Ovary (tissue), 10 donors: ENCODE measurements at regions of chr15 and their contacts with region 1.

Region 1: DNA sequence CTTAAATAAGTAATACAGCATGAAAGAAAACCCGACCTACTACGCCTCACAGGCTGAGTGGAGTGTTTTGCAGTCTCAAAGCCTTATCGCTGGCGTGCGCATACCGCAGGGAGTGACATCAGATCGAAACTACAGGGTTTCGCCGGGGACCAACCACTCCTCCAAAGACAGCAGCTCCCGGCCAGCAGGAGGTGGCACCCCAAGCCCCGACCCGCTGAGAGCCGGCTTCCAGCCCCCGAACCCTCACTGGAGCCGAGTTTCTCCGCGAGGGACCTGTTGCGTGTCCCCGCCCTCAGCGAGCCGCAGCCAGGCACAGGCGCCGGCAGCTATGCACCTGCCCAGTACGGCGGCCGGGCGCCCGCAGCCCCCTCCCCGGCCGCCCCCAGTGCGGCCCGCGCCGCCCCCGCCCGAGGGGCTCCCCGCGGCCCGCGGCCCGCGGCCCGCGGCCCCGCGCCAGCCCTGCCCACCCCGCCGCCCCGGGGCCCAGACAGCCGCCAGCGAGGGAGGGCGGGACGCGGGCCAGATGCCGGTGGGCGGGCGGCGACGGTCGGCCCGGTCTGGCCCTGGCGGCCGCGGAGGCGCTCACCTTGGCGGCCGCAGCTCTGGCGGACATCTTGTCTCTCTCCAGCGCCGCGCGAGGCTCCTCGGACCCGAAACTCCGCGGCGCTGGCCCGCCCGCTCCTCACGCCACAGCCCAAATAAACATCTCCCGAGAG is 694 bp downstream of the TJP1 start:
- DNase-seq: peak; percentile 63 to 71 (median 66)
- H3K4me3 ChIP-seq: peak overlapping the region; percentile 95
- H3K27ac ChIP-seq: peak overlapping the region; percentile 90 to 92
- H3K4me1 ChIP-seq: peaks cover 5% of the 10 kb centered on the region
- H3K27me3 ChIP-seq: no peaks in the 10 kb centered on the region
- CTCF ChIP-seq: peak in 1 of 3 donors; percentile 20
- EP300 ChIP-seq: no peak
- POLR2A ChIP-seq: no peak

Region 2: DNA sequence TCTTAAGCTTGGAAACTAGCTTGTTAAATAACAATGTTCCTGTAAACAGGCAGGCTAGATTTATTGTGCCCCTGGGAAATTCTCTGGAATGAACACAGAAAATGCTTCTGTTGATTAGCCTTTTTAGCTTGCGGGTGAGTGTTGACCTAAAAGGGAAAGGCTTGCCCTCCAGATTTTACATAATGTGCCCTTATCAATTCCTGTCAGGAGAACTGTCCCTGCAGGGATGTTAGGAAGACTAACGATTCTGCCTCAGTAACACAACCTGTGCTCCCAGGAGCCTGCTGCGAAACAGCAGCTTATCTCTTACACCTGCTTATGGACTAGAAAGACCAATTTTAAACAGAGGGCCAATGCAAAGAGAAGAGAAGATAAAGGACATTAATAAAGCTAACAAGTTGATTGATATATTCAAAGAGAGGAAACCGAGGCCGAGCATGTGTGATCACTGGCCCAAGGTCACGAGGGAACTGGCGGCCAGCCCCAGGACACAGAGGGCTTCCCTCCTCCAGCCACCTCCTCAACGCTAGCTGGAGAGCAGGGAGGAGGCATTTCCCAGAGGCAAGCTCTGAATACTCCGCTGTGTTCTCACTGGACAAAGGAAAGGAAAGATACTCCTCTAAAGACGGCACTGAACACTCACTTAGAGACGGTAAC is 49.0 kb after region 1 on chr15:
- intact Hi-C with region 1: loop called in 2 of 4 experiments (anchors 2 to 5 kb)
- DNase-seq: peak; percentile 56 to 83 (median 64)
- H3K4me3 ChIP-seq: peak overlapping the region; percentile 1
- H3K27ac ChIP-seq: peak overlapping the region in 1 of 2 donors; percentile 18
- H3K4me1 ChIP-seq: peaks cover 5% of the 10 kb centered on the region
- H3K27me3 ChIP-seq: no peaks in the 10 kb centered on the region
- CTCF ChIP-seq: no peak
- EP300 ChIP-seq: no peak
- POLR2A ChIP-seq: no peak

Region 3: GRCh38 chr15:29942143-29942542 is 120.6 kb after region 1 on chr15:
- intact Hi-C with region 1: no loop called
- DNase-seq: no peak
- H3K4me3 ChIP-seq: no peak overlapping the region
- H3K27ac ChIP-seq: no peak overlapping the region
- H3K4me1 ChIP-seq: no peaks in the 10 kb centered on the region
- H3K27me3 ChIP-seq: no peaks in the 10 kb centered on the region
- CTCF ChIP-seq: no peak
- EP300 ChIP-seq: no peak
- POLR2A ChIP-seq: no peak